ENCODE measurements at regions of chr1 and their contacts with region 1.

Region 1: GRCh38 chr1:171485375-171486047 is at the start of gene PRRC2C:
- DNase-seq: peak; percentile 87 to 99 (median 93)
- ATAC-seq: peak; percentile 81
- H3K4me3 ChIP-seq: peak within 1 kb of the TSS; percentile 85
- H3K4me3 Mint-ChIP-seq: peak within 1 kb of the TSS; percentile 95
- H3K27ac ChIP-seq: peak within 1 kb of the TSS; percentile 100
- H3K27ac Mint-ChIP-seq: peak within 1 kb of the TSS; percentile 95
- H3K4me1 ChIP-seq: peaks cover 30% of the 10 kb centered on the region
- H3K4me1 Mint-ChIP-seq: peaks cover 50% of the 10 kb centered on the region
- H3K27me3 ChIP-seq: no peaks in the 10 kb centered on the region
- H3K27me3 Mint-ChIP-seq: no peaks in the 10 kb centered on the region
- CTCF ChIP-seq: peak; percentile 47
- total RNA-seq, gene PRRC2C: 357 to 387 TPM

Region 2: GRCh38 chr1:170074250-170075157 is 1411.0 kb before region 1 on chr1 and contains the start of gene KIFAP3:
- CTCF ChIA-PET with region 1: no interaction called
- POLR2A ChIA-PET with region 1: no interaction called
- intact Hi-C with region 1: no loop called
- DNase-seq: peak; percentile 88 to 99 (median 93)
- ATAC-seq: peak; percentile 95
- H3K4me3 ChIP-seq: peak within 1 kb of the TSS; percentile 83
- H3K4me3 Mint-ChIP-seq: peak within 1 kb of the TSS; percentile 97
- H3K27ac ChIP-seq: peak within 1 kb of the TSS; percentile 77 to 83
- H3K27ac Mint-ChIP-seq: peak within 1 kb of the TSS; percentile 85
- H3K4me1 ChIP-seq: peaks cover 15% of the 10 kb centered on the region
- H3K4me1 Mint-ChIP-seq: peaks cover 54% of the 10 kb centered on the region
- H3K27me3 ChIP-seq: no peaks in the 10 kb centered on the region
- H3K27me3 Mint-ChIP-seq: no peaks in the 10 kb centered on the region
- CTCF ChIP-seq: peak; percentile 69
- total RNA-seq, gene KIFAP3: 12.1 to 12.6 TPM

Region 3: GRCh38 chr1:171313835-171314320 is 171.6 kb before region 1 on chr1 and contains the start of gene FMO4:
- CTCF ChIA-PET with region 1: interaction called, 7 read pairs
- POLR2A ChIA-PET with region 1: interaction called, 16 read pairs
- intact Hi-C with region 1: loop called in 1 of 2 experiments (anchors 5 kb)
- DNase-seq: peak; percentile 57 to 97 (median 70)
- ATAC-seq: peak; percentile 100
- H3K4me3 ChIP-seq: peak within 1 kb of the TSS; percentile 41
- H3K4me3 Mint-ChIP-seq: peak within 1 kb of the TSS; percentile 66
- H3K27ac ChIP-seq: peak within 1 kb of the TSS in 1 of 2 donors; percentile 41
- H3K27ac Mint-ChIP-seq: peak within 1 kb of the TSS; percentile 81
- H3K4me1 ChIP-seq: no peaks in the 10 kb centered on the region
- H3K4me1 Mint-ChIP-seq: peaks cover 17% of the 10 kb centered on the region
- H3K27me3 ChIP-seq: no peaks in the 10 kb centered on the region
- H3K27me3 Mint-ChIP-seq: no peaks in the 10 kb centered on the region
- CTCF ChIP-seq: peak; percentile 78
- total RNA-seq, gene FMO4: 0.70 to 1.1 TPM

Region 4: GRCh38 chr1:171389171-171389570 is 96.3 kb before region 1 on chr1:
- CTCF ChIA-PET with region 1: no interaction called
- POLR2A ChIA-PET with region 1: no interaction called
- intact Hi-C with region 1: no loop called
- DNase-seq: no peak
- ATAC-seq: no peak
- H3K4me3 ChIP-seq: no peak overlapping the region
- H3K4me3 Mint-ChIP-seq: no peak overlapping the region
- H3K27ac ChIP-seq: no peak overlapping the region
- H3K27ac Mint-ChIP-seq: no peak overlapping the region
- H3K4me1 ChIP-seq: no peaks in the 10 kb centered on the region
- H3K4me1 Mint-ChIP-seq: no peaks in the 10 kb centered on the region
- H3K27me3 ChIP-seq: no peaks in the 10 kb centered on the region
- H3K27me3 Mint-ChIP-seq: peaks cover 18% of the 10 kb centered on the region
- CTCF ChIP-seq: no peak

Region 5: DNA sequence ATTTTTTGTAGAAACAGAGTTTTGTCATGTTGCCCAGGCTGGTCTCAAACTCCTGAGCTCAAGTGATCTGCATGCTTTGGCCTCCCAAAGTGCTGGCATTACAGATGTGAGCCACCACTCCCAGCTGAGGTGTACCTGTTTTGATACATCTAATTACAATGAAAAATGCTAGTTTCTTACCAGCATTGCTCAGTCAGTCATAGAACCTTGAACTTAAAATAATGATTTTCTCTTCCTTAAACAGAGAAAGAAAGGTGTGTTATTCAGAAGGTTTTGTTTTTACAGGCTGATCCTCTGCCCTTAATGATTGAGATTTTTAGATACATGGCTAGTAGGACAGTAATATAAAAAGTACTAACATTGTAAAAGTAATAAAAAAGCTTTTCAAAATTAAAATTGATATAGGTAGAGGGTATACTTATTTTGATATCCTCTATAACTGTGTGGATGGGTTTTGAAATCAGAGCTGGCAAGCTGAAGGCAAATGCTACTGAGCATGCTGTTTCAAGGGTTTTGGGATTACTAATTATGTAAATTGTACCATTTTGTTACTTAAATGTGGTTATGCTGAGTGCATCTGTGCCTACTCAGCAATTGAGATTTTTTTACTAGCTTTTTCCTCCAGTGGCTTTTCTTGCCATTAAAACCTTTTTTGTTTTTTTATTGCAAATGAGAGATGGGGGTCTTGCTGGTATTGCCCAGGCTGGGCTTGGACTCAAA is 16.0 kb after region 1 on chr1:
- CTCF ChIA-PET with region 1: interaction called, 25 read pairs
- POLR2A ChIA-PET with region 1: interaction called, 14 read pairs
- intact Hi-C with region 1: no loop called
- DNase-seq: no peak
- ATAC-seq: no peak
- H3K4me3 ChIP-seq: no peak overlapping the region
- H3K4me3 Mint-ChIP-seq: peak overlapping the region; percentile 11
- H3K27ac ChIP-seq: no peak overlapping the region
- H3K27ac Mint-ChIP-seq: peak overlapping the region; percentile 1
- H3K4me1 ChIP-seq: peaks cover 54% of the 10 kb centered on the region
- H3K4me1 Mint-ChIP-seq: peaks cover 98% of the 10 kb centered on the region
- H3K27me3 ChIP-seq: no peaks in the 10 kb centered on the region
- H3K27me3 Mint-ChIP-seq: no peaks in the 10 kb centered on the region
- CTCF ChIP-seq: no peak

Region 6: DNA sequence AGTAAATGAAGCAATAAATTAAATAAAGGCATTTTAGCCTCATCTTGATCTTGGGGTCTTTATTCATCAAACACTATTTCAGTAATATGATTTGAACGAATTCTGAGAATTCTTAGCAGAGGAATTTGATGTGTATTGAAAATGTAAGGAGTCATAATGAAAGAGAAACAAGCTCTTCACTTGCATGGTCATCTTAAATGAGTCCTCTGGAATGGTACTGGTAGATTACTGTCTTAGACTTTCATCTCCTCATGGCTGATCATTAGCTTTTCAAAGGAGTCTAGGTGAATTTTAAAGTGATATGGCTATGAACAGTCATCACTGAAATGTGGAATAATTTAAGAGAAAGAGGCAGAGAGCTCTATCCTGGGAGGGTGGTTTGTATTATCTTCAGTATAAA is 29.8 kb after region 1 on chr1:
- CTCF ChIA-PET with region 1: interaction called, 25 read pairs
- POLR2A ChIA-PET with region 1: interaction called, 4 read pairs
- intact Hi-C with region 1: loop called in 1 of 2 experiments (anchors 2 kb)
- DNase-seq: no peak
- ATAC-seq: no peak
- H3K4me3 ChIP-seq: no peak overlapping the region
- H3K4me3 Mint-ChIP-seq: no peak overlapping the region
- H3K27ac ChIP-seq: no peak overlapping the region
- H3K27ac Mint-ChIP-seq: no peak overlapping the region
- H3K4me1 ChIP-seq: no peaks in the 10 kb centered on the region
- H3K4me1 Mint-ChIP-seq: peaks cover 46% of the 10 kb centered on the region
- H3K27me3 ChIP-seq: no peaks in the 10 kb centered on the region
- H3K27me3 Mint-ChIP-seq: no peaks in the 10 kb centered on the region
- CTCF ChIP-seq: no peak

Region 7: DNA sequence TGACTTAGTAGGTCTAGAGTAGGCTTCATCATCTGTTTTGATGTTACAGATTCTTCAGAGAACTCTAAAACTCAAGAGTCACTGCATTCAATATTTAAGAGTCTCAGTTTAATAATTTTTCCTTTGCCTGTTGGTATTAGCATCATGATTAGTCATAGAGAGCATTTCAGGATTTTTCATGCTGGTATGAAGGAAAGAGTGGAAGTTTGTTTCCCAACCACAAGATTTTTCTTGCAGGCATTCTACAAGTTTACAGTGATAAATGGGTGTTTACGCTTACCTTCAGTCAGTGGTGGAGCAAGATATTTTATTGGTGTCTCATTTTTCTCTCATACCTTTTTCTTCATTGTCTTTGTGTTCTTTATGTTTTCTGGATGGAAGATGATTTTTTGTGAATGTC is 78.2 kb after region 1 on chr1:
- CTCF ChIA-PET with region 1: interaction called, 5 read pairs
- POLR2A ChIA-PET with region 1: no interaction called
- intact Hi-C with region 1: loop called in 1 of 2 experiments (anchors 5 kb)
- DNase-seq: no peak
- ATAC-seq: no peak
- H3K4me3 ChIP-seq: no peak overlapping the region
- H3K4me3 Mint-ChIP-seq: no peak overlapping the region
- H3K27ac ChIP-seq: no peak overlapping the region
- H3K27ac Mint-ChIP-seq: no peak overlapping the region
- H3K4me1 ChIP-seq: no peaks in the 10 kb centered on the region
- H3K4me1 Mint-ChIP-seq: peaks cover 3% of the 10 kb centered on the region
- H3K27me3 ChIP-seq: no peaks in the 10 kb centered on the region
- H3K27me3 Mint-ChIP-seq: no peaks in the 10 kb centered on the region
- CTCF ChIP-seq: no peak

Region 8: GRCh38 chr1:171781176-171781875 is 295.8 kb after region 1 on chr1 and contains the start of gene METTL13:
- CTCF ChIA-PET with region 1: interaction called, 3 read pairs
- POLR2A ChIA-PET with region 1: interaction called, 13 read pairs
- intact Hi-C with region 1: loop called (anchors 1 to 2 kb)
- DNase-seq: peak; percentile 95 to 100 (median 98)
- ATAC-seq: peak; percentile 91
- H3K4me3 ChIP-seq: peak within 1 kb of the TSS; percentile 78
- H3K4me3 Mint-ChIP-seq: peak within 1 kb of the TSS; percentile 99
- H3K27ac ChIP-seq: peak within 1 kb of the TSS; percentile 63 to 75
- H3K27ac Mint-ChIP-seq: peak within 1 kb of the TSS; percentile 90
- H3K4me1 ChIP-seq: peaks cover 46% of the 10 kb centered on the region
- H3K4me1 Mint-ChIP-seq: peaks cover 47% of the 10 kb centered on the region
- H3K27me3 ChIP-seq: no peaks in the 10 kb centered on the region
- H3K27me3 Mint-ChIP-seq: no peaks in the 10 kb centered on the region
- CTCF ChIP-seq: no peak
- total RNA-seq, gene METTL13: 6.5 to 7.9 TPM

Region 9: GRCh38 chr1:171984850-171985485 is 499.5 kb after region 1 on chr1:
- CTCF ChIA-PET with region 1: no interaction called
- POLR2A ChIA-PET with region 1: no interaction called
- intact Hi-C with region 1: loop called in 1 of 2 experiments (anchors 10 kb)
- DNase-seq: peak in 4 of 14 experiments; percentile 6 to 59 (median 58)
- ATAC-seq: peak; percentile 63
- H3K4me3 ChIP-seq: no peak overlapping the region
- H3K4me3 Mint-ChIP-seq: no peak overlapping the region
- H3K27ac ChIP-seq: no peak overlapping the region
- H3K27ac Mint-ChIP-seq: no peak overlapping the region
- H3K4me1 ChIP-seq: no peaks in the 10 kb centered on the region
- H3K4me1 Mint-ChIP-seq: no peaks in the 10 kb centered on the region
- H3K27me3 ChIP-seq: no peaks in the 10 kb centered on the region
- H3K27me3 Mint-ChIP-seq: no peaks in the 10 kb centered on the region
- CTCF ChIP-seq: peak; percentile 79

Measured in CD4-positive, alpha-beta T cell (primary cell).